T-cell (primary cell): ENCODE measurements at regions of chr2 and their contacts with region 1.

Region 1: GRCh38 chr2:28681158-28681571 is 70.5 kb upstream of the PPP1CB start:
- DNase-seq: peak; percentile 16 to 82 (median 44)
- ATAC-seq: peak; percentile 88 to 98 (median 90)
- H3K4me3 ChIP-seq: no peak overlapping the region
- H3K4me3 Mint-ChIP-seq: peak overlapping the region in 1 of 3 donors; percentile 17
- H3K27ac ChIP-seq: peak overlapping the region; percentile 55
- H3K27ac Mint-ChIP-seq: peak overlapping the region; percentile 6 to 84
- H3K4me1 ChIP-seq: peaks cover 10 to 19% of the 10 kb centered on the region in 2 experiments
- H3K4me1 Mint-ChIP-seq: peaks cover 33 to 39% (median 33%) of the 10 kb centered on the region in 3 donors
- H3K27me3 ChIP-seq: no peaks in the 10 kb centered on the region
- H3K27me3 Mint-ChIP-seq: no peaks in the 10 kb centered on the region

Region 2: DNA sequence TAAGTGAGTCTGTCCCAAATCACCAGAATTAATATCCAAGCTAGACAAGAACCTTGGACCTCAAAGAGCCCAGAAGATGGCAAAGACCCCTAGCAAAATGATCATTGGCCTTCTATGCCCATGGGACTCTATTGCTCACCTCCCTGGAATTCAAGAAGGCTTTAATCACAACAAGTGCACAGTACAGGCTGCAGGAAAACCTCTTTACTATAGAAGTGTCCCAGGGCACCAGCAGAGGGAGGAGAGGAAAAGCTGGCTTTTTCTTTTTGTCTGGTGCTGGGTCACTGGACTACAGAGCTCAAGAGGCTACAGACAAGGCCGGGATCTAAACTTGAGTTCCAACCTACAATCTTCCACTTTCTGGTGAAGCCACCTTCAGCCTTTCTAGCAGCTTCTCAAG is 17.8 kb before region 1 on chr2:
- CTCF ChIA-PET with region 1: interaction called in 1 of 2 experiments, 10 read pairs
- POLR2A ChIA-PET with region 1: no interaction called
- DNase-seq: no peak
- ATAC-seq: no peak
- H3K4me3 ChIP-seq: no peak overlapping the region
- H3K4me3 Mint-ChIP-seq: no peak overlapping the region
- H3K27ac ChIP-seq: no peak overlapping the region
- H3K27ac Mint-ChIP-seq: no peak overlapping the region
- H3K4me1 ChIP-seq: no peaks in the 10 kb centered on the region
- H3K4me1 Mint-ChIP-seq: peaks cover 2 to 4% (median 2%) of the 10 kb centered on the region in 3 donors
- H3K27me3 ChIP-seq: peaks cover 0 to 3% of the 10 kb centered on the region in 2 experiments
- H3K27me3 Mint-ChIP-seq: peaks cover 0 to 4% of the 10 kb centered on the region in 2 donors

Region 3: GRCh38 chr2:28705751-28706440 is 24.7 kb after region 1 on chr2:
- CTCF ChIA-PET with region 1: interaction called in 1 of 2 experiments, 14 read pairs
- POLR2A ChIA-PET with region 1: no interaction called
- DNase-seq: no peak
- ATAC-seq: no peak
- H3K4me3 ChIP-seq: no peak overlapping the region
- H3K4me3 Mint-ChIP-seq: no peak overlapping the region
- H3K27ac ChIP-seq: no peak overlapping the region
- H3K27ac Mint-ChIP-seq: no peak overlapping the region
- H3K4me1 ChIP-seq: no peaks in the 10 kb centered on the region
- H3K4me1 Mint-ChIP-seq: peaks cover 0 to 4% (median 0%) of the 10 kb centered on the region in 3 donors
- H3K27me3 ChIP-seq: no peaks in the 10 kb centered on the region
- H3K27me3 Mint-ChIP-seq: no peaks in the 10 kb centered on the region